Transverse colon (tissue), 4 donors: ENCODE measurements at regions of chr20 and their contacts with region 1.

Region 1: GRCh38 chr20:25390538-25391528 is at the start of gene ABHD12:
- DNase-seq: peak; percentile 98
- H3K4me3 ChIP-seq: peak within 1 kb of the TSS; percentile 71 to 94 (median 74)
- H3K27ac ChIP-seq: peak within 1 kb of the TSS; percentile 94 to 98 (median 94)
- H3K4me1 ChIP-seq: peaks cover 3 to 15% (median 11%) of the 10 kb centered on the region in 4 donors
- H3K27me3 ChIP-seq: no peaks in the 10 kb centered on the region
- CTCF ChIP-seq: no peak
- EP300 ChIP-seq: no peak
- POLR2A ChIP-seq: peak; percentile 91
- total RNA-seq, gene ABHD12: 67.3 to 103 (median 73.4) TPM

Region 2: DNA sequence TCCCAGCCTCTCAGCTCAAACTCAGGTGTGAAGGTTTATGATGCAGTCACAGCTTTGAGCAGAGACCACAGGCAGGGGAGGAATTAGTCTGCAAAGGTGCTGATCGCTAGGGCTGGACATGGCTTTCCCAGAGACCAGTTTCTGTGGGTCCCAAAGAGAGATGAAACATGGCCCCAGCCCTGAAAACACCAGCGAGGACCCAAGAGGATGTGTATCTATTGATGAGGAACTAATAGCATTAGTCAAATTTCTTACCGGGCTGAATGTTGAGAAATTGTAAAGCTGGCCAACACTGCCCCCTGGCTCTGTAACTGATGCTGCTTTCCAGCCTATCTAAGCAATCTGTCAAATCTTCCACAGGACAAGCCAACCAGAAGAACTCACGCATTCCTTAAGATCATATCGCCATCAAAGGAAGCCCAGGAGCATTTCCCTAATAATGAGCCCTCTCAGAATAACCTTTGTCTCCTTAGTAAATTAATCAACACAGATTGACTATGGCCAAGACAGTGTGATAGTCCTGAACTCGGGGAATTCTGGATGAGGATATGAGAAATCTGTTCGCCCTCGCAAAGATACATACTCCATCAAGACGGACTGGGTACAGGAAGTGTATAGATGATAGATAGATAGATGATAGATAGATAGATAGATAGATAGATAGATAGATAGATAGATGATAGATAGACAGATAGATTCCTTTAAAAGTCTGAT is 325.1 kb before region 1 on chr20:
- in situ Hi-C with region 1: loop called in 1 of 4 experiments (anchors 25 kb)
- intact Hi-C with region 1: no loop called
- DNase-seq: peak; percentile 72
- H3K4me3 ChIP-seq: no peak overlapping the region
- H3K27ac ChIP-seq: no peak overlapping the region
- H3K4me1 ChIP-seq: peaks cover 0 to 8% (median 3%) of the 10 kb centered on the region in 4 donors
- H3K27me3 ChIP-seq: peaks cover 17% of the 10 kb centered on the region
- CTCF ChIP-seq: peak; percentile 74 to 89 (median 77)
- EP300 ChIP-seq: no peak
- POLR2A ChIP-seq: no peak

Region 3: DNA sequence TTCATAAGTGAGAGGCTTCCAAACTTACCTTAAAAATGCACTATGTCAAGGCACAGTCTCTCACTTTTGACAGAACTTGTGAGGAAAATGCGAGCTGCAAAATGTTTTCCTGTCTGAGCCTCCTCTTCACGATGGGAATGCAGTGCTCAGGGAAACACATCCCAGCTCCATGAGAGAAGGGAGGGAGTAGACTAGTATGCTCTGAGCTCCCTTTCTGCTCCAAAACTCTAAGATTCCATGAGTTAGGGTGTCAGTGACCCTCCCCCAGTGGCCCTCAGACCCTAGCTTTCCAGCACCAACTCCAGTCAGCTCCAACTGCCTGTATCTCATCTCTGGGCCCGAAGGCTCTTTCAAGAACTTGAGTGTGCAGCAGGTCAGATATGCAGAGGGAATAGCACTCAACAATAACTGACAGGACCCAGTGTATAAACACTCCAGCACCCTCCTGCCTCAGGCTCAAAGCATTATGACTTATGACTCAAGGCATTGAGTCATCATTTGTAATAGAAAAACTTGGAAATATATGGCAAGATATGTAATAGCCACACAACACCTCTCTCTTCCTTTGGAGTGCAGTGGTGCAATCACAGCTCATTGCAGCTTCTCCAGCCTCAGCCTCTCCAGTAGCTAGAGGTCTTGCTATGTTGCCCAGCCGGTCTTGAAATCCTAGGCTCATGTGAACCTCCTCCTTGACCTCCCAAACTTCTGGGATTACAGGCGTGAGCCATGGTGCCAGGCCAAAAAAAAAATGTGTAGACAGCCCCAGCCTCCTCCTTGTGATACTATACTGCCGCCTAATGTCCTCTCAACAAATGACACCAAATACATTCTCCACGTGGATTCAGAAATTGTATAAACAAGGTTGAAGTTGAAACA is 212.0 kb before region 1 on chr20:
- in situ Hi-C with region 1: no loop called
- intact Hi-C with region 1: no loop called
- DNase-seq: no peak
- H3K4me3 ChIP-seq: no peak overlapping the region
- H3K27ac ChIP-seq: peak overlapping the region in 2 of 4 donors; percentile 22 to 72
- H3K4me1 ChIP-seq: peaks cover 0 to 9% (median 0%) of the 10 kb centered on the region in 4 donors
- H3K27me3 ChIP-seq: no peaks in the 10 kb centered on the region
- CTCF ChIP-seq: peak; percentile 66 to 80 (median 70)
- EP300 ChIP-seq: no peak
- POLR2A ChIP-seq: no peak